CD4-positive, alpha-beta memory T cell (primary cell): ENCODE measurements at regions of chr18 and their contacts with region 1.

Region 1: GRCh38 chr18:9614401-9615279 is at the start of gene PPP4R1:
- DNase-seq: peak; percentile 58 to 78 (median 64)
- H3K4me3 ChIP-seq: peak within 1 kb of the TSS; percentile 66 to 90
- H3K4me3 Mint-ChIP-seq: peak within 1 kb of the TSS; percentile 93 to 99 (median 96)
- H3K27ac ChIP-seq: peak within 1 kb of the TSS; percentile 64
- H3K27ac Mint-ChIP-seq: peak within 1 kb of the TSS; percentile 93 to 96 (median 95)
- H3K4me1 ChIP-seq: peaks cover 40% of the 10 kb centered on the region
- H3K4me1 Mint-ChIP-seq: peaks cover 29 to 54% (median 37%) of the 10 kb centered on the region in 4 donors
- H3K27me3 ChIP-seq: no peaks in the 10 kb centered on the region
- H3K27me3 Mint-ChIP-seq: no peaks in the 10 kb centered on the region
- total RNA-seq, gene PPP4R1: 64.0 to 71.0 TPM

Region 2: GRCh38 chr18:8704361-8705279 is 910.0 kb before region 1 on chr18:
- CTCF ChIA-PET with region 1: no interaction called
- POLR2A ChIA-PET with region 1: no interaction called
- intact Hi-C with region 1: loop called (anchors 10 kb)
- DNase-seq: peak; percentile 76 to 86 (median 79)
- H3K4me3 ChIP-seq: peak overlapping the region; percentile 54 to 73
- H3K4me3 Mint-ChIP-seq: peak overlapping the region; percentile 87 to 96 (median 91)
- H3K27ac ChIP-seq: peak overlapping the region; percentile 48
- H3K27ac Mint-ChIP-seq: peak overlapping the region in 4 of 7 donors; percentile 50 to 79 (median 72)
- H3K4me1 ChIP-seq: peaks cover 26% of the 10 kb centered on the region
- H3K4me1 Mint-ChIP-seq: peaks cover 10 to 35% (median 15%) of the 10 kb centered on the region in 4 donors
- H3K27me3 ChIP-seq: peaks cover 29% of the 10 kb centered on the region
- H3K27me3 Mint-ChIP-seq: peaks cover 36 to 58% of the 10 kb centered on the region in 2 donors

Region 3: DNA sequence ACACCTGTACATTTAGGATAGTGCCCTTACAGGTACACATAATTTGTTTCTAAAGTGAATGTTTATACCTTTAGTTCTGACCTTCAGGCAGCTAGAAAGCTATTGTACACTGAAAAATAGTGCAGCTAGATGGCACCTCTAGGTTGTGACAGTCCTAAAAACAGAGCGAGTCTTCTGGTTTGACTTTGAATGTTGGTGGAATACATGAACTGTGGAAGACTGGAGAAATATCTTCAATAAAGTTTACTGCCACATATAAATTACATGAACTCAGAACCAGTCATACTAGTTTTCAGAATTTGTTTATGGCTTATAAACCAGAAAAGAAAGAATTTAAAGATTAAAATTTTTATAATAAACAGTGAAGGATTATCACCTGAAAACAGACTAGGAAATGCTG is 338.8 kb before region 1 on chr18:
- CTCF ChIA-PET with region 1: no interaction called
- POLR2A ChIA-PET with region 1: no interaction called
- intact Hi-C with region 1: no loop called
- DNase-seq: no peak
- H3K4me3 ChIP-seq: no peak overlapping the region
- H3K4me3 Mint-ChIP-seq: no peak overlapping the region
- H3K27ac ChIP-seq: no peak overlapping the region
- H3K27ac Mint-ChIP-seq: no peak overlapping the region
- H3K4me1 ChIP-seq: no peaks in the 10 kb centered on the region
- H3K4me1 Mint-ChIP-seq: no peaks in the 10 kb centered on the region
- H3K27me3 ChIP-seq: no peaks in the 10 kb centered on the region
- H3K27me3 Mint-ChIP-seq: no peaks in the 10 kb centered on the region

Region 4: GRCh38 chr18:9334329-9334972 is 280.2 kb before region 1 on chr18 and contains the start of gene TWSG1:
- CTCF ChIA-PET with region 1: no interaction called
- POLR2A ChIA-PET with region 1: no interaction called
- intact Hi-C with region 1: loop called (anchors 2 kb)
- DNase-seq: peak; percentile 90 to 94 (median 91)
- H3K4me3 ChIP-seq: peak within 1 kb of the TSS; percentile 76 to 90
- H3K4me3 Mint-ChIP-seq: peak within 1 kb of the TSS; percentile 85 to 96 (median 90)
- H3K27ac ChIP-seq: peak within 1 kb of the TSS; percentile 57
- H3K27ac Mint-ChIP-seq: peak within 1 kb of the TSS; percentile 83 to 93 (median 91)
- H3K4me1 ChIP-seq: peaks cover 17% of the 10 kb centered on the region
- H3K4me1 Mint-ChIP-seq: peaks cover 8 to 27% (median 18%) of the 10 kb centered on the region in 4 donors
- H3K27me3 ChIP-seq: no peaks in the 10 kb centered on the region
- H3K27me3 Mint-ChIP-seq: peaks cover 1 to 6% of the 10 kb centered on the region in 2 donors
- total RNA-seq, gene TWSG1: 5.1 to 6.0 TPM

Region 5: DNA sequence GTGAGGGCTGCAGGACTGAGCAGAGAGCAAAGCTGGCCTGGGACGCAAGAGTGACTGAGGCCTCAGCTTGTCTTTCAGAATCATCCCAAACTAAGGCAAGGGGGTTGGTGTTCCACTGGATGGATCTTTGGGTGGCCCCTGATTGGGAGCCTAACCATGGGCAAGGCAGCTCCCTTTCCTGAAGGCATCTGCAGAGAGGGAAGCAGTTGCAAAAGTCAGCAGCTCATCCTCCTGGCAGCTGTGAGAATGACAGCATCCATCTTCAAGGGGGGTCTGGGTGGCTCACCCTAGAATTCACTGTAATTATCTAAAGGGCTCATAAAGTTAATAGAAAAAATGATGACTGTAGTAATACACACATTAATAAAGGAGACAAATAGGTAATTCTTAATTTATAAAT is 46.9 kb after region 1 on chr18:
- CTCF ChIA-PET with region 1: interaction called, 13 read pairs
- POLR2A ChIA-PET with region 1: no interaction called
- intact Hi-C with region 1: loop called (anchors 5 kb)
- DNase-seq: no peak
- H3K4me3 ChIP-seq: no peak overlapping the region
- H3K4me3 Mint-ChIP-seq: no peak overlapping the region
- H3K27ac ChIP-seq: no peak overlapping the region
- H3K27ac Mint-ChIP-seq: no peak overlapping the region
- H3K4me1 ChIP-seq: no peaks in the 10 kb centered on the region
- H3K4me1 Mint-ChIP-seq: no peaks in the 10 kb centered on the region
- H3K27me3 ChIP-seq: no peaks in the 10 kb centered on the region
- H3K27me3 Mint-ChIP-seq: peaks cover 0 to 4% of the 10 kb centered on the region in 2 donors

Region 6: GRCh38 chr18:9722691-9723090 is 108.1 kb after region 1 on chr18:
- CTCF ChIA-PET with region 1: no interaction called
- POLR2A ChIA-PET with region 1: no interaction called
- intact Hi-C with region 1: loop called (anchors 1 kb)
- DNase-seq: no peak
- H3K4me3 ChIP-seq: no peak overlapping the region
- H3K4me3 Mint-ChIP-seq: no peak overlapping the region
- H3K27ac ChIP-seq: no peak overlapping the region
- H3K27ac Mint-ChIP-seq: no peak overlapping the region
- H3K4me1 ChIP-seq: no peaks in the 10 kb centered on the region
- H3K4me1 Mint-ChIP-seq: no peaks in the 10 kb centered on the region
- H3K27me3 ChIP-seq: no peaks in the 10 kb centered on the region
- H3K27me3 Mint-ChIP-seq: peaks cover 7 to 16% of the 10 kb centered on the region in 2 donors